ENCODE measurements at regions of chr10 and their contacts with region 1.

Region 1: DNA sequence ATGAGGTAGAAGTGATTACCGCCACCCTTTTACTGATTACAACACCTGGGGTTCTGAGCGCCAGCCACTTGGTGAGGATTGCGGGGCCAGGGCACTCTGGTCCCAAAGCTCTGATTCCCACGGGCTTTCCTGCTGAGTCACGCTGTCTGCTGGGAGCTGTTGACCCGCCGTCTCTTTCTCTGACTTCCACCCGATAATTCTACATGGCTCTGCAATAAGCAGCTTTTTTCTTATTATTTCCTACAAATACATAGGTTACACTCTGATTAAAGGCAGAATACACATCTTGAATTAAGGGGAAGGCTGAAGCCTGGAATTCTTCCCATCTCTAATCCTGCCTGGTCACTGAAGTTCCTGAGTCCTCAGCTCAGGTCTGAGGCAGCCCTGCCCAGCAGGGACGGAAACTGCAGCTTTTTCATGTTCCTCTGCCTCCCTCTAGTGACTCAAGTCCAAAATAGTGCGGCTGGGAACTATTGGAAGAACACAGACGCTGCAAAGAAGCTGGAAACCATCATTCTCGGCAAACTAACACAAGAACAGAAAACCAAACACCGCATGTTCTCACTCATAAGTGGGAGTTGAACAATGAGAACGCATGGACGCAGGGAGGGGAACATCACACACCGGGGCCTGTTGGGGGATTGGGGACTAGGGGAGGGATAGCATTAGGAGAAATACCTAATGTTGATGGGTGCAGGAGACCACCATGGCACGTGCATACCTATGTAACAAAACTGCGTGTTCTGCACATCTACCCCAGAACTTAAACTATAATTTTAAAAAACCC is 178.3 kb downstream of the PRKCQ start:
- DNase-seq: peak; percentile 90
- H3K4me3 ChIP-seq: peak overlapping the region in 3 of 4 donors; percentile 34 to 45 (median 37)
- H3K27ac ChIP-seq: peak overlapping the region; percentile 51 to 71 (median 56)
- H3K4me1 ChIP-seq: peaks cover 0 to 21% (median 12%) of the 10 kb centered on the region in 4 donors
- H3K27me3 ChIP-seq: no peaks in the 10 kb centered on the region
- CTCF ChIP-seq: peak; percentile 74 to 87 (median 84)
- EP300 ChIP-seq: no peak
- POLR2A ChIP-seq: no peak

Region 2: DNA sequence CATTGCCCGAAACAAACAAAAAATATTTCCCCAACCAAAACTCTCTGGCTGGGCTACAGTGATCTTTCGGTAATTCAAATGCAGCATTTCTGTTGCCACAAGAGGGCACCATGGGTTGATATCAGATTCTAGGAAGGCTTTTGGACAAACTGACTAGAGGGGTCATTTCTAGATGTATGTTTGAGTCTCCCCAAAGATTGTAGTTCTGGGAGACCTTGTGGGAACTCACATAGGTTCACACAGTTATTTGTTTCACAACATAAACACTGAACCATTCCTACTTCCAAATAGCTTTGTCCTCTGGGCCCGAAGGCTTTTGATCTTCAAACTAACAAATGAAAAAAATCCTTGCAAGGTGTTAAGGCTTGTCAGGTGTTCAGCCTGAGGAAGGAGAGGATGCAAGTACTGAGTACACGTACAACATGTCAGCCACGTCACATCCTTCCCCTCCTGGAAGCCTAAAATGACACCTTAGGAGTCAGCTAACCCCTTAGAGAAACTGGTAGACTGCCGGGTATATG is 387.5 kb before region 1 on chr10:
- intact Hi-C with region 1: loop called (anchors 5 kb)
- DNase-seq: no peak
- H3K4me3 ChIP-seq: no peak overlapping the region
- H3K27ac ChIP-seq: no peak overlapping the region
- H3K4me1 ChIP-seq: no peaks in the 10 kb centered on the region
- H3K27me3 ChIP-seq: peaks cover 0 to 3% (median 0%) of the 10 kb centered on the region in 3 donors
- CTCF ChIP-seq: peak; percentile 16 to 63 (median 56)
- EP300 ChIP-seq: no peak
- POLR2A ChIP-seq: no peak

Region 3: GRCh38 chr10:6088721-6089390 is 312.9 kb before region 1 on chr10 and contains the start of gene RBM17:
- intact Hi-C with region 1: loop called (anchors 1 kb)
- DNase-seq: peak; percentile 99
- H3K4me3 ChIP-seq: peak within 1 kb of the TSS; percentile 77 to 100 (median 92)
- H3K27ac ChIP-seq: peak within 1 kb of the TSS; percentile 81 to 94 (median 90)
- H3K4me1 ChIP-seq: peaks cover 0 to 54% (median 39%) of the 10 kb centered on the region in 4 donors
- H3K27me3 ChIP-seq: no peaks in the 10 kb centered on the region
- CTCF ChIP-seq: peak; percentile 96 to 100 (median 98)
- EP300 ChIP-seq: no peak
- POLR2A ChIP-seq: no peak
- total RNA-seq, gene RBM17: 50.8 to 63.1 (median 54.8) TPM

Region 4: DNA sequence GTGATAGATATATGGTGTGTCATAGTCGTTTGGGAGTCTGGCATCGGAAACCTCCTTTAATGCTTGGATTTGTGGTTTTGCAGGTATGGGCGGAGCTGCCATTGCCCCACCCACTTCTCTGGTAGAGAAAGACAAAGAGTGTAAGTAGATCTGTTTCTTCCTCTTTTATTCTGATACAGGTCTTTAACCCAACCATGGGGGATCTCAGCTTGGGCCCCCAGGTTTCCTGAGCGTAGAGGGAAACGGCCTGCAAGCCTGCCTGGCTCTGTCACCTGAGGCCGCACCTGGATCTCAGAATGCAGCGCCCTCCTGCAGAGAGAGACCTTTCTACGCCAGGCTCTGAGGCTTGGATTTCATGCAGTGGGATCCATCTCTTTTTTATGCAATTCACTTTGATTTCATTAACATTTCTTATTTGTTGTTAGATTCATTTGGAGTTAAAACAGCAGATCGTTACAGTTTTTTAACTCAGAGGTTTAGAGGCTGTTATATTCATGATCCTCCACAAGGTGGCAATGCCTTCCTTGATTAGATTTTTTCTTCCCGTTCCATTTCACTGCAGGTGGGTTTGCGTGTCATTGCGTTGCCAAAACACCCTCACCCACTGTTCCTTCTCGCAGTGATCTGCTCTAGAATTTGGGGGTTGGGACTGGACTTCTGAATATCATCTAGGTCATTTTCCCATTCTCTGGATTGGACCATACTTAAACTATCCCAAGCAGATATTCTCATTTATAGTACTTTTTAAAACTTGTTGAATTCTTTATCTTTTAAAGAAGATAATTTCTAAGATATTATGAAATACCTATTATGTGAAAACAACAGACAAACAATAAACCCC is 292.9 kb before region 1 on chr10:
- intact Hi-C with region 1: loop called (anchors 1 kb)
- DNase-seq: no peak
- H3K4me3 ChIP-seq: no peak overlapping the region
- H3K27ac ChIP-seq: no peak overlapping the region
- H3K4me1 ChIP-seq: peaks cover 0 to 3% (median 0%) of the 10 kb centered on the region in 4 donors
- H3K27me3 ChIP-seq: no peaks in the 10 kb centered on the region
- CTCF ChIP-seq: peak; percentile 62 to 71 (median 67)
- EP300 ChIP-seq: no peak
- POLR2A ChIP-seq: no peak

Region 5: DNA sequence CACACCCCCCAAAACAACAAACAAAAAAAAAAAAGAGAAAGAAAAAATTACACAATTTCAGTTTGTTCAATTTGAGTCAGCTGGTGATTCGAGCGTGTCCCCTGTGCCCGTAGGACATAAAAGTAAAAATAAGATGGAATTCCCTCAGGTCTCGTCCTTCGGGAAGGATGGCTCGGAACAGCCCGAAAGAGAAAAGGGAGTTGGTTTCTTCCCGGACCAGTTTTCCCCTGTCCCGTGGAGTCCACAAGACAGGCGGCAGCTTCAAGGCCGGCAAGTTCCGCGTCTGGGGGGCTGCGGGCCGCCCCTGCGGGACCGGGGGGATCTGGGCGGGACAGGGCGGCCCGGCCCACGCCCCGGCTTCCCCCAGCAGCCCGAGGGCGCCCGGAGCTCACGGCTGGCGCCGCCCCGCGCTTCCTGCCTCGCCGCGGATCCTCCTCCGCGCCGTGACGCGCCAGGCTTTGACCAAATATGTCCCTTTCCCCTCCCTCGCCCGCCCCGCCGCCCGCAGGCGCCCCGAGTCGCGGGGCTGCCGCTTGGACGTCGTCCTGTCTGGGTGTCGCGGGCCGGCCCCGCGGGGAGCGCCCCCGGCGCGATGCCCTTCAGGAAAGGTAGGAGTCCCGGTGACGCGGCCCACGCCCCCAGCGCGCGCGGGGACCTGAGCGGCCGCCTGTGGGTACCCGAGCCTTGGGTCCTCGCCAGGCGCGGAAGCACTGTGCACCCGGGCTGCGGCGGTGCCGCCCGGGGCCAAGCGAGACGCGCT is 257.2 kb before region 1 on chr10:
- intact Hi-C with region 1: loop called (anchors 1 kb)
- DNase-seq: peak; percentile 95
- H3K4me3 ChIP-seq: peak overlapping the region; percentile 75 to 93 (median 82)
- H3K27ac ChIP-seq: peak overlapping the region; percentile 81 to 91 (median 86)
- H3K4me1 ChIP-seq: peaks cover 0 to 22% (median 16%) of the 10 kb centered on the region in 4 donors
- H3K27me3 ChIP-seq: peaks cover 0 to 14% (median 0%) of the 10 kb centered on the region in 3 donors
- CTCF ChIP-seq: no peak
- EP300 ChIP-seq: no peak
- POLR2A ChIP-seq: peak in 1 of 2 donors; percentile 14

Region 6: DNA sequence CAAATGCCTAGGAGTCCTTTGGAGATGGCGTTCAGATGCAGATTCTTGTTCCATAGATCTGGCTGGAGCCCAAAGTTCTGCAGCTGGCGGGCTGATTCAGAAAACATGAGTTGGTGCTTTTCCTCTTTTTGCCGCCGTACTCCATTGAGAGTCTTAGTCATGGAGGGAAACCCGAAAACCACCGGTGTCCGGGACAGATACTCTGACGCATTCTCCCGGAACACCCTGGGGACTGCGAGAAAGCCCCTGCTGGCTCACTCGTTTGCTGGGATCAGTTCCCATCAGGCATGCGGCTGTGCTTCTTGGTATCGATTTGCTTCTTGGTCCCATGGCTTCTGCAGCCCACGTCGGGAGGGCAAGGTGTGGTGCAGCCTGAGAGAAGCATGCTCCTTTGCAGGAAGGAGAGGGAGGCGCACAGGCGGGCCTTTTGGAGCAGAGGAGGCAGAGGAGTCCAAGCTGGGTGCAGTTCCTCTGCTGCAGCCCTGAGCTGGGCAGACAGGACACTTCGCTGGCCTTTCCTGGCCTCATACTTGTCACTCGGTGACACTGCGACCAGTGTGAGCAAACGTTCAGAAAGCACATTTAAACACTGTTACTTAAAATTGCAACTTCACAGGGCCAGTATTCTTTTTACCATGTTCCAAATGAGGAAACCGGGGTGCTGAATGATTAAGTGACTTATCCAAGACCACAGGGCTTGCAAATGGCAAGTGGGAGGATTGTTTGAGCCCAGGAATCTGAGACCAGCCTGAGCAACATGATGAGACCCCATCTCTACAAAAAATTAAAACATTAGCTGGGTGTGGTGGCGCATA is 229.7 kb before region 1 on chr10:
- intact Hi-C with region 1: no loop called
- DNase-seq: peak; percentile 84
- H3K4me3 ChIP-seq: no peak overlapping the region
- H3K27ac ChIP-seq: peak overlapping the region; percentile 7 to 41 (median 29)
- H3K4me1 ChIP-seq: peaks cover 0 to 69% (median 52%) of the 10 kb centered on the region in 4 donors
- H3K27me3 ChIP-seq: no peaks in the 10 kb centered on the region
- CTCF ChIP-seq: no peak
- EP300 ChIP-seq: peak in 2 of 4 donors; percentile 61 to 86
- POLR2A ChIP-seq: no peak

Region 7: DNA sequence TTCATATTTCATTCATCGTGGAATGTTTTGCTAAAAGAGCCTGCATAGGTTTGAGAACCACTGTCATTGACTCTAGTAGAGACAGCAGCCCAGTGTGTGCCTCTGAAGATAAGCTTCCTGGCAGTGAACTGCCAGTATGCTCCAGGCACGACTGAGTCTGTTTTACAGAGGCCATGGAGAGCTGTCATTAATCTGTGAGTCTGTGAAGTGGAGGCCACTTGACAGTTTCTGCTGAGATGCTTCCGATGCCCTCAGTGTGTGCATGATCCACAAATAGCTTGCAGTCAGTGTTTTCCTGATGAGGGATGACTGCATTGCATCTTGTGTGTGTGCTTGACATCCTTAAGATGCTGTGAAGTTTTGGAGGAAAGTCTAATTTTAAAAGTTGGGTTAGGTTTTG is 36.9 kb before region 1 on chr10:
- intact Hi-C with region 1: no loop called
- DNase-seq: no peak
- H3K4me3 ChIP-seq: no peak overlapping the region
- H3K27ac ChIP-seq: no peak overlapping the region
- H3K4me1 ChIP-seq: peaks cover 0 to 8% (median 0%) of the 10 kb centered on the region in 4 donors
- H3K27me3 ChIP-seq: no peaks in the 10 kb centered on the region
- CTCF ChIP-seq: no peak
- EP300 ChIP-seq: no peak
- POLR2A ChIP-seq: no peak

Region 8: DNA sequence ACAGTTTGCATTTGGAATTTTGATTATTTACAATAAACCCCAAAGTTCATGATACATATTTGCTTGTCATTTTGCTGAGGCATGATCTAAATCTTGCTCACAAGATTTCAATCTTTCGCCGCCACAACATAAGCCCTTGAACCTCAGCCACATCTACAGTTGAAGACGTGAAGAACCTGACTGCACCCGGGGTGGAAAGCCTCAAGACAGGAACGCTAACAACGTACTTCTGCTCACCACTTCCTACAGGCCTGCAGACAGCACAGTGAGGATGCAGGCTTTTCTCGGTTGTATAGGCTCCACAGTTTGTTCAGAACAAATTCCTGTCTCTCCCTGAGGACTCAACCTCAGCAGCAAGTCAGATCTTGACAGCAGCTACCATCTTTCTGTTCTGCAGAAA is 572.1 kb after region 1 on chr10:
- intact Hi-C with region 1: no loop called
- DNase-seq: no peak
- H3K4me3 ChIP-seq: no peak overlapping the region
- H3K27ac ChIP-seq: no peak overlapping the region
- H3K4me1 ChIP-seq: no peaks in the 10 kb centered on the region
- H3K27me3 ChIP-seq: no peaks in the 10 kb centered on the region
- CTCF ChIP-seq: no peak
- EP300 ChIP-seq: no peak
- POLR2A ChIP-seq: no peak